ENCODE measurements at regions of chr15 and their contacts with region 1.

Region 1: GRCh38 chr15:99414755-99415731 is 150.7 kb upstream of the MEF2A start:
- DNase-seq: peak in 2 of 5 donors; percentile 19 to 65
- ATAC-seq: peak in 1 of 4 donors; percentile 44
- H3K4me3 ChIP-seq: no peak overlapping the region
- H3K27ac ChIP-seq: no peak overlapping the region
- H3K4me1 ChIP-seq: peaks cover 0 to 10% (median 0%) of the 10 kb centered on the region in 12 donors
- H3K27me3 ChIP-seq: no peaks in the 10 kb centered on the region
- CTCF ChIP-seq: no peak
- POLR2A ChIP-seq: no peak

Region 2: GRCh38 chr15:99486371-99487336 is 71.6 kb after region 1 on chr15:
- intact Hi-C with region 1: loop called in 1 of 10 experiments (anchors 10 kb)
- DNase-seq: peak; percentile 84 to 94 (median 93)
- ATAC-seq: peak; percentile 84 to 94 (median 93)
- H3K4me3 ChIP-seq: peak overlapping the region in 10 of 12 donors; percentile 13 to 56 (median 46)
- H3K27ac ChIP-seq: peak overlapping the region; percentile 20 to 91 (median 82)
- H3K4me1 ChIP-seq: peaks cover 0 to 35% (median 27%) of the 10 kb centered on the region in 12 donors
- H3K27me3 ChIP-seq: no peaks in the 10 kb centered on the region
- CTCF ChIP-seq: no peak
- POLR2A ChIP-seq: peak in 1 of 2 donors; percentile 34